ENCODE measurements at regions of chrX and their contacts with region 1.

Region 1: GRCh38 chrX:103585411-103586313 is at the start of gene TCEAL4:
- H3K4me3 ChIP-seq: peak within 1 kb of the TSS; percentile 55
- H3K27ac ChIP-seq: peak within 1 kb of the TSS; percentile 17; the same call in 1 of the 2 replicates
- H3K4me1 ChIP-seq: no peaks in the 10 kb centered on the region
- CTCF ChIP-seq: no peak

Region 2: DNA sequence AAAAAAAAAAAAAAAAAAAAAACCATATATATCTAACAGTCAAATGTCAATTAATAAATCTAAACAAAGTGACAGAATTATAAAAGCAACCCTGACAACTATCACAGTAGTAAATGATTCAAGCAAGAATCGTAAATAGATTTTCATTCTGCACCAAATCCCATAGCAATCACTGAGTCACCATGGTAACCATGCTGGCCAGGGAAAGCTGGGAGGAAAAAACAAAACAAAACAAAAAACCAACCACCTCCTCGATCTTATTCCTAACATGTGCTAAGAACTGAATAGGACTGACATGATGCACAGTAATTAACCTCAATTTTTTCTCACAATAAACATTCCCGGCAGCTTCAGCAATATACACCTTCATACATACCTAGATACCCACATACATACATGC is 35.7 kb before region 1 on chrX:
- CTCF ChIA-PET with region 1: no interaction called
- POLR2A ChIA-PET with region 1: no interaction called
- H3K4me3 ChIP-seq: no peak overlapping the region
- H3K27ac ChIP-seq: no peak overlapping the region
- H3K4me1 ChIP-seq: no peaks in the 10 kb centered on the region
- CTCF ChIP-seq: no peak

Region 3: GRCh38 chrX:103562801-103563200 is 22.9 kb before region 1 on chrX:
- CTCF ChIA-PET with region 1: no interaction called
- POLR2A ChIA-PET with region 1: no interaction called
- H3K4me3 ChIP-seq: no peak overlapping the region
- H3K27ac ChIP-seq: no peak overlapping the region
- H3K4me1 ChIP-seq: no peaks in the 10 kb centered on the region
- CTCF ChIP-seq: no peak

Region 4: GRCh38 chrX:103573208-103573607 is 12.5 kb before region 1 on chrX:
- CTCF ChIA-PET with region 1: no interaction called
- POLR2A ChIA-PET with region 1: interaction called, 13 read pairs
- H3K4me3 ChIP-seq: no peak overlapping the region
- H3K27ac ChIP-seq: no peak overlapping the region
- H3K4me1 ChIP-seq: no peaks in the 10 kb centered on the region
- CTCF ChIP-seq: no peak

Measured in HEK293 (cell line).